IMR-90 (cell line): ENCODE measurements at regions of chr22 and their contacts with region 1.

Region 1: GRCh38 chr22:45496411-45497190 is 6.1 kb upstream of the FBLN1 start:
- DNase-seq: no peak
- ATAC-seq: no peak
- H3K4me3 ChIP-seq: no peak overlapping the region
- H3K27ac ChIP-seq: peak overlapping the region; percentile 73
- H3K4me1 ChIP-seq: peaks cover 25% of the 10 kb centered on the region
- H3K27me3 ChIP-seq: no peaks in the 10 kb centered on the region
- CTCF ChIP-seq: no peak
- POLR2A ChIP-seq: no peak
- RAD21 ChIP-seq: no peak

Region 2: GRCh38 chr22:45478108-45478771 is 18.4 kb before region 1 on chr22:
- CTCF ChIA-PET with region 1: no interaction called
- POLR2A ChIA-PET with region 1: no interaction called
- dilution Hi-C with region 1: no loop called
- in situ Hi-C with region 1: no loop called
- intact Hi-C with region 1: loop called (anchors 2 kb)
- DNase-seq: peak; percentile 96
- ATAC-seq: peak; percentile 91
- H3K4me3 ChIP-seq: no peak overlapping the region
- H3K27ac ChIP-seq: peak overlapping the region; percentile 74
- H3K4me1 ChIP-seq: peaks cover 22% of the 10 kb centered on the region
- H3K27me3 ChIP-seq: no peaks in the 10 kb centered on the region
- CTCF ChIP-seq: no peak
- POLR2A ChIP-seq: no peak
- RAD21 ChIP-seq: no peak

Region 3: DNA sequence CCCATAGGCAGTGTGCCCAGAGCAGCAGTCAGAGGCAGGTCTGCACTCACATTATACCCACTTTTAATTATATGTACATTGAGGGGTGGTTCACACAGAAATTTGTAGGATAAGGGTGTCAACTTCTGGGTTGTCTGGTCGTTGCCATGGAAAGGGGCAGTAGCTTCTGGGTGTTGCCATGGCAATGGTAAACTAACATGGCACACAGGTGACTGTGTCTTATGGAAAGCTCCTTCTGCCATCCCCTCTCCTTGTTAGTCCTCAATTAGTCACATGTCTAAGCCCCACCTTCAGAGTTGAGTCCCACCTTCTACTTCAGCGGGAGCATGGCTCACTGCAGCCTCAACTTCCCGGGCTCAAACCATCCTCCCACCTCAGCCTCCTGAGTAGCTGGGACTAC is 118.8 kb after region 1 on chr22:
- CTCF ChIA-PET with region 1: no interaction called
- POLR2A ChIA-PET with region 1: no interaction called
- dilution Hi-C with region 1: no loop called
- in situ Hi-C with region 1: no loop called
- intact Hi-C with region 1: no loop called
- DNase-seq: no peak
- ATAC-seq: no peak
- H3K4me3 ChIP-seq: no peak overlapping the region
- H3K27ac ChIP-seq: no peak overlapping the region
- H3K4me1 ChIP-seq: peaks cover 4% of the 10 kb centered on the region; the same call in 1 of the 2 replicates
- H3K27me3 ChIP-seq: no peaks in the 10 kb centered on the region
- CTCF ChIP-seq: no peak
- POLR2A ChIP-seq: no peak
- RAD21 ChIP-seq: no peak